Heart left ventricle (tissue), 16 donors: ENCODE measurements at regions of chr7 and their contacts with region 1.

Region 1: GRCh38 chr7:129433847-129434674 is at the start of gene STRIP2:
- DNase-seq: peak; percentile 94 to 96 (median 96)
- ATAC-seq: peak; percentile 97 to 99 (median 99)
- H3K4me3 ChIP-seq: peak within 1 kb of the TSS; percentile 66 to 95 (median 82)
- H3K27ac ChIP-seq: peak within 1 kb of the TSS in 11 of 12 donors; percentile 54 to 81 (median 71)
- H3K4me1 ChIP-seq: peaks cover 0 to 24% (median 7%) of the 10 kb centered on the region in 12 donors
- H3K27me3 ChIP-seq: peaks cover 0 to 36% (median 0%) of the 10 kb centered on the region in 9 donors
- CTCF ChIP-seq: peak in 5 of 12 donors; percentile 3 to 12 (median 7)
- POLR2A ChIP-seq: peak in 1 of 2 donors; percentile 83
- total RNA-seq, gene STRIP2: 11.4 to 43.7 (median 18.2) TPM

Region 2: GRCh38 chr7:128710481-128710880 is 723.6 kb before region 1 on chr7:
- intact Hi-C with region 1: no loop called
- DNase-seq: no peak
- ATAC-seq: no peak
- H3K4me3 ChIP-seq: no peak overlapping the region
- H3K27ac ChIP-seq: no peak overlapping the region
- H3K4me1 ChIP-seq: peaks cover 0 to 11% (median 0%) of the 10 kb centered on the region in 12 donors
- H3K27me3 ChIP-seq: no peaks in the 10 kb centered on the region
- CTCF ChIP-seq: no peak
- POLR2A ChIP-seq: no peak

Region 3: GRCh38 chr7:129394982-129395914 is 38.8 kb before region 1 on chr7:
- intact Hi-C with region 1: loop called in 1 of 10 experiments (anchors 5 kb)
- DNase-seq: no peak
- ATAC-seq: peak in 2 of 4 donors; percentile 48 to 54
- H3K4me3 ChIP-seq: no peak overlapping the region
- H3K27ac ChIP-seq: peak overlapping the region in 2 of 12 donors; percentile 12 to 17
- H3K4me1 ChIP-seq: peaks cover 0 to 25% (median 0%) of the 10 kb centered on the region in 12 donors
- H3K27me3 ChIP-seq: no peaks in the 10 kb centered on the region
- CTCF ChIP-seq: no peak
- POLR2A ChIP-seq: no peak